ENCODE measurements at regions of chr22 and their contacts with region 1.

Region 1: GRCh38 chr22:23849009-23850006 is 8.4 kb upstream of the SLC2A11 start:
- DNase-seq: peak; percentile 87 to 92
- ATAC-seq: peak; percentile 63 to 84 (median 68)
- H3K4me3 ChIP-seq: peak overlapping the region; percentile 46
- H3K27ac ChIP-seq: no peak overlapping the region
- H3K4me1 ChIP-seq: peaks cover 35% of the 10 kb centered on the region
- H3K27me3 ChIP-seq: no peaks in the 10 kb centered on the region
- CTCF ChIP-seq: peak; percentile 97

Region 2: GRCh38 chr22:23542933-23543332 is 306.4 kb before region 1 on chr22:
- intact Hi-C with region 1: loop called (anchors 5 kb)
- DNase-seq: no peak
- ATAC-seq: no peak
- H3K4me3 ChIP-seq: no peak overlapping the region
- H3K27ac ChIP-seq: no peak overlapping the region
- H3K4me1 ChIP-seq: no peaks in the 10 kb centered on the region
- H3K27me3 ChIP-seq: no peaks in the 10 kb centered on the region
- CTCF ChIP-seq: no peak

Region 3: GRCh38 chr22:23548501-23549197 is 300.7 kb before region 1 on chr22:
- intact Hi-C with region 1: loop called (anchors 5 kb)
- DNase-seq: no peak
- ATAC-seq: no peak
- H3K4me3 ChIP-seq: no peak overlapping the region
- H3K27ac ChIP-seq: no peak overlapping the region
- H3K4me1 ChIP-seq: no peaks in the 10 kb centered on the region
- H3K27me3 ChIP-seq: peaks cover 0 to 11% (median 2%) of the 10 kb centered on the region in 3 donors
- CTCF ChIP-seq: no peak

Region 4: DNA sequence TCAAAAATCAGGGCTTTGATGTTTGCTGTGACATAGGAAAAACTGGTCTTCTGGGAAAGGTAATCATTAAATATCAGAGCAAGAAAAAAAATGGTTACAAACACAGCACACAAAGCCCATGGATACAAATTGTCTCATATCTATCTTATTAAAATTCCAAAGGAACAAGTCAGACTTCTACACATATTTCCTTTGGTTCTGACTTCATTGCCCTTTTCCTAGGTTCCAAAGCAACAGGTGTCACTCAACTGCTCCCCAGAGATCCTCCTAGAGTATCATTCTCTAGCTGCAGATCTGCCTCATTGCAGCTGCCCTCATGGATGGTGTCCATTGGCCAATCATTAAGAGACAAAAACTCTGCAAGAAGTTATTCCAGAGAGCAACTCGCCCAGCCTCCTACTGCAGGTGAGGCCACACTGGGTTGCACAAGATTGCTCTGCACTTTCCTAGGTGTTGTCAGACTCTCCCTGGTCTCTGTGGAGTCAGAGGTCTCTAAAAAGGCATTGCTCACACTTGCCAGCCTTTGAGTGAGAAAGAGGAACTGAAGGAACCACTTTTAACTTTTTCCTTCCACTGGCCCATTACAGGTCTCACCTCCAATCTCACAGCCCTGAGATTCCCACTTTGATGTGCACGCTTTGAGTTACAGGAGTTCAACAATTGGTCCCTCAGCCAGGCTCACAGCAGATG is 222.9 kb before region 1 on chr22:
- intact Hi-C with region 1: loop called in 1 of 2 experiments (anchors 5 kb)
- DNase-seq: no peak
- ATAC-seq: no peak
- H3K4me3 ChIP-seq: no peak overlapping the region
- H3K27ac ChIP-seq: no peak overlapping the region
- H3K4me1 ChIP-seq: no peaks in the 10 kb centered on the region
- H3K27me3 ChIP-seq: no peaks in the 10 kb centered on the region
- CTCF ChIP-seq: no peak

Region 5: DNA sequence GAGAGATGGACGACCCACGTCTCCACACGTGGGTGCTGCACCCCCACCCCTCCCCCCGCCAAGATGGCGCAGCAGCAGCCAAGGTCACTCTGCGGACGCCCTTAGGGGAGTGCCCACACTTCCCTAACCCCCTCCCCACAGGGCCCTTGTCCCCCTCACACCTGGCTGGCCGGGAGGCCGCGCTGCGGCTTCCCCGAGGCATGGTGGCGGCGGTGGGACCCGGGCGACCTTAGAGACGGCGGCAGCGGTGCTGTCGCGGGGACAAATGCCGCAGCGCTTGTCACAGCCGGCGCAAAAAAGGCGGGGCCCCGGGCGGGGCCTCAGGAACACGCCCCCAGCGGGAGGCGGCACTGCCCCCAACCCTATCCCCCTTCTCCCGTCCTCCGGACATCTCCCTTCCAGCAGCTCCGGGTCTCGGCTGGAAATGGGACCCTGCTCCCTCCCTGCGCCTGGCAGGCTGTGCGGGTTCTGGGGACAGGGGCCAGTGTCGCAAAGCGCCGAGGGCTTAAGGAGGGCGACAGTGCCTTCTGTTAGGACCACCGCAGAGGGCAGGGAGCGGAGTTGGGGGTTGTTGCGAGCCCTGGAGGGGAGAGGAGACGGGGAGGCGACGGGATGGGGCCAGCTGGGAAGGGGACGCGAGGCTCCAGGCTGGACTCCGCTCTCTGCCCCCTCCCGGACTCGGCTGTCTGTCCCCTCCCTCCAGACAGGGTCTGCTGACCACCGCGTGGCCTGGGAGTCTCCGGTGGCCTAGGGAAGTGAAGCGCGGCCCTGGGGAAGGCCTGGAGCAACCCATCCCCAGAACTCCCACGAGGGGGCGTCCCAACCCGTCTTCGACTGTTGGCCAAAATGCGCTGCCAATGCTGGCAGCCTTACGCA is 81.4 kb before region 1 on chr22 and contains the start of gene CHCHD10:
- intact Hi-C with region 1: loop called (anchors 1 to 5 kb)
- DNase-seq: peak; percentile 89 to 95
- ATAC-seq: peak; percentile 78 to 87 (median 82)
- H3K4me3 ChIP-seq: peak within 1 kb of the TSS; percentile 79
- H3K27ac ChIP-seq: peak within 1 kb of the TSS; percentile 98
- H3K4me1 ChIP-seq: peaks cover 33% of the 10 kb centered on the region
- H3K27me3 ChIP-seq: no peaks in the 10 kb centered on the region
- CTCF ChIP-seq: peak; percentile 87
- total RNA-seq, gene CHCHD10: 659 to 1,066 (median 865) TPM

Region 6: GRCh38 chr22:23786752-23787599 is 62.3 kb before region 1 on chr22 and contains the start of gene SMARCB1:
- intact Hi-C with region 1: loop called in 1 of 2 experiments (anchors 5 kb)
- DNase-seq: peak; percentile 94 to 96
- ATAC-seq: peak; percentile 90 to 92 (median 92)
- H3K4me3 ChIP-seq: peak within 1 kb of the TSS; percentile 92
- H3K27ac ChIP-seq: peak within 1 kb of the TSS; percentile 99
- H3K4me1 ChIP-seq: peaks cover 32% of the 10 kb centered on the region
- H3K27me3 ChIP-seq: no peaks in the 10 kb centered on the region
- CTCF ChIP-seq: no peak
- total RNA-seq, gene SMARCB1: 21.9 to 76.6 (median 48.3) TPM